GM12878 (cell line): ENCODE measurements at regions of chr1 and their contacts with region 1.

Region 1: DNA sequence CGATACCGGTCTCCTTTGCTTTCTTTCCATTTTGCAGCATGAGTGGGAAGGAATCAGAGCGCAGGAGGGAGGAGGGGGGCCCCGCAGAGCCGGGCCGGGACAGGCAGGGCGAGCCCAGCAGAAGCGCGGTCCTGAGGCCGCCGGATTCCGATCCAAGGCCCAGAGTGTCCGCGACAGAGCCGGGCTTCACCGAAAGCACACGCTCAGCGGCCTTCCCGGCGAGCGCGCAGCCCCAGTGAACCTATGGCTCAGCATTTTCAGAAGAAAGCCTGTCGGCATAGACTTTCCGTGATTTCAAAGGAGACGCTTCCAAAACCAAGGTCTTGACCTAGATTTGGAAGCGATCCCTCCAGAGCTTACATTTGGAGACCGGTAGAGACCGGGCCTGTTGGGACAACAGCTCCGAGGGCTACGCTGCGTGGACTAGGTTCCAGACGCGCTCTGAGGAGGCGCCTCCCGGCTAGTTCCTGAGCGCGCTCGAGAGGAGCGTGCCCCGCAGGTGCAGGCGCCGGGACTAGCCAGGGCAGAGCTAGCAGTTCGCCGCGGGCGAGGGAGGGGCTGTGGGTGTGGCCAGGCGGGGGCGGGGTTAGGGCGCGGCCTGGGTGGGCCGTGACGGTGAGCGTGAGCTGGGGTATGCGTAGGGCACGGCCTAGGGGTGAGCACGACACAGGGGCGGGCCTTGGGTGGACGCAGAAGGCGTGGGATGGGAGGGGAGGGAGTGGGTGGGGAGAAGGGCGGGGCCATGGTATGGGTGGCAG is 27.8 kb upstream of the PRSS38 start:
- DNase-seq: peak; percentile 88
- ATAC-seq: peak; percentile 94
- H3K4me3 ChIP-seq: peak overlapping the region; percentile 77
- H3K27ac ChIP-seq: no peak overlapping the region
- H3K4me1 ChIP-seq: peaks cover 10% of the 10 kb centered on the region
- H3K27me3 ChIP-seq: no peaks in the 10 kb centered on the region
- CTCF ChIP-seq: no peak
- EP300 ChIP-seq: no peak
- POLR2A ChIP-seq: peak; percentile 68; the same call in 1 of the 2 replicates
- RAD21 ChIP-seq: no peak

Region 2: GRCh38 chr1:227734856-227735538 is 52.7 kb before region 1 on chr1 and contains the starts of genes JMJD4 and SNAP47:
- CTCF ChIA-PET with region 1: interaction called, 4 read pairs
- POLR2A ChIA-PET with region 1: interaction called, 4 read pairs
- RAD21 ChIA-PET with region 1: no interaction called
- SMC1A ChIA-PET with region 1: no interaction called
- in situ Hi-C with region 1: no loop called
- intact Hi-C with region 1: loop called (anchors 10 kb)
- DNase-seq: peak; percentile 57
- ATAC-seq: peak; percentile 94
- H3K4me3 ChIP-seq: peak within 1 kb of the TSS; percentile 78
- H3K27ac ChIP-seq: peak within 1 kb of the TSS; percentile 60
- H3K4me1 ChIP-seq: peaks cover 3% of the 10 kb centered on the region; the same call in 1 of the 2 replicates
- H3K27me3 ChIP-seq: no peaks in the 10 kb centered on the region
- CTCF ChIP-seq: no peak
- EP300 ChIP-seq: no peak
- POLR2A ChIP-seq: peak; percentile 92
- RAD21 ChIP-seq: no peak
- polyA plus RNA-seq, gene JMJD4: 0.89 to 3.5 TPM
- polyA plus RNA-seq, gene SNAP47: 1.3 to 3.5 TPM

Region 3: GRCh38 chr1:228405987-228406265 is 618.2 kb after region 1 on chr1:
- CTCF ChIA-PET with region 1: no interaction called
- POLR2A ChIA-PET with region 1: no interaction called
- RAD21 ChIA-PET with region 1: no interaction called
- SMC1A ChIA-PET with region 1: no interaction called
- in situ Hi-C with region 1: no loop called
- intact Hi-C with region 1: loop called (anchors 5 kb)
- DNase-seq: no peak
- ATAC-seq: peak; percentile 44
- H3K4me3 ChIP-seq: peak overlapping the region; percentile 97
- H3K27ac ChIP-seq: peak overlapping the region; percentile 86
- H3K4me1 ChIP-seq: peaks cover 4% of the 10 kb centered on the region; the same call in 1 of the 2 replicates
- H3K27me3 ChIP-seq: no peaks in the 10 kb centered on the region
- CTCF ChIP-seq: no peak
- EP300 ChIP-seq: no peak
- POLR2A ChIP-seq: no peak
- RAD21 ChIP-seq: no peak